ENCODE measurements at regions of chr16 and their contacts with region 1.

Region 1: GRCh38 chr16:67883872-67884261 is 818 bp upstream of the NRN1L start:
- DNase-seq: peak; percentile 57
- H3K4me3 Mint-ChIP-seq: no peak overlapping the region
- H3K27ac Mint-ChIP-seq: peak overlapping the region; percentile 72
- H3K4me1 Mint-ChIP-seq: peaks cover 17% of the 10 kb centered on the region
- H3K27me3 Mint-ChIP-seq: no peaks in the 10 kb centered on the region
- CTCF ChIP-seq: peak; percentile 80

Region 2: GRCh38 chr16:67694611-67695010 is 189.3 kb before region 1 on chr16:
- CTCF ChIA-PET with region 1: no interaction called
- POLR2A ChIA-PET with region 1: no interaction called
- intact Hi-C with region 1: no loop called
- DNase-seq: no peak
- H3K4me3 Mint-ChIP-seq: no peak overlapping the region
- H3K27ac Mint-ChIP-seq: no peak overlapping the region
- H3K4me1 Mint-ChIP-seq: no peaks in the 10 kb centered on the region
- H3K27me3 Mint-ChIP-seq: no peaks in the 10 kb centered on the region
- CTCF ChIP-seq: no peak

Region 3: GRCh38 chr16:67841764-67842508 is 41.9 kb before region 1 on chr16 and contains the start of gene THAP11:
- CTCF ChIA-PET with region 1: interaction called, 15 read pairs
- POLR2A ChIA-PET with region 1: interaction called, 4 read pairs
- intact Hi-C with region 1: no loop called
- DNase-seq: peak; percentile 97
- H3K4me3 Mint-ChIP-seq: peak within 1 kb of the TSS; percentile 84
- H3K27ac Mint-ChIP-seq: peak within 1 kb of the TSS; percentile 86
- H3K4me1 Mint-ChIP-seq: peaks cover 16% of the 10 kb centered on the region
- H3K27me3 Mint-ChIP-seq: no peaks in the 10 kb centered on the region
- CTCF ChIP-seq: peak; percentile 85
- total RNA-seq, gene THAP11: 18.3 and 20.5 TPM in 2 replicates

Region 4: DNA sequence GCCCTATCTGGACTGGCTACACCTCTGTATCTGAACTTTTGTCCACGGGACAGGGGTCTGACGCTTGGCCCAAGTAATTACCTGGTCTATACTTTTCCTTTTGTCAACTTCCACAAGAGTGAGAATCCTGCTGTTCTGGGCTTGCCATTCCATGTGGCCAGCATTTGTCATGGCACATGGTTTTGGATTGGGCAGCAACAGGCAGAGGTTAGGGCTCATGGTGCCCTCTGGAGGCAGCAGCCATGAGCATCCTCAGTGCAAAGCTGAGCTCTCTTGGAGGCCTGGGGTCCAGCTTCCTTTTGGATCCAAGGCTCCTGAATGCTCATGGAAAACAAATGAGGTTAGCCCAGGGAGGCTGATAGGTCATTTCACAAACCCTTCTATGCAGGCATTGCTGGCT is 18.6 kb before region 1 on chr16:
- CTCF ChIA-PET with region 1: interaction called, 11 read pairs
- POLR2A ChIA-PET with region 1: interaction called, 9 read pairs
- intact Hi-C with region 1: no loop called
- DNase-seq: peak; percentile 63
- H3K4me3 Mint-ChIP-seq: no peak overlapping the region
- H3K27ac Mint-ChIP-seq: peak overlapping the region; percentile 96
- H3K4me1 Mint-ChIP-seq: peaks cover 27% of the 10 kb centered on the region
- H3K27me3 Mint-ChIP-seq: no peaks in the 10 kb centered on the region
- CTCF ChIP-seq: peak; percentile 39

Region 5: DNA sequence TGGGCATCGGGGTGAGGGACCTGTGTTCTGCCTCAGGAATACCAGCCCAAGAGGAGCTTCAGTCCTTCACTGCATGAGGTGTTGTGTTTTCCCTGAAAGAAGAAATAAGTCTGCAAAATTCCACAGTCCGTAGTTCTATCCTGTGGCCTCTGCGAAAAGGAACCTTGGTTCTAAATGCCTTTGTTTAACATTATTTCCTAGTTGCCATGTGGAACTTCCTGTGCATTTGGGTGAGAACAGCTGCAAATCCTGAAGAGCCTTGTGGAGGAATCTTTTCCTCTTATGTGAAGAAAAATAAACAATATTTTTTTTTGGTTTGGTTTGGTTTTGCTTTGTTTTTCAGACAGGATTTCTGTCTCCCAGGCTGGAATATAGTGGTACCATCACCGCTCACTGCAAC is 19.0 kb after region 1 on chr16:
- CTCF ChIA-PET with region 1: interaction called, 16 read pairs
- POLR2A ChIA-PET with region 1: interaction called, 4 read pairs
- intact Hi-C with region 1: no loop called
- DNase-seq: no peak
- H3K4me3 Mint-ChIP-seq: no peak overlapping the region
- H3K27ac Mint-ChIP-seq: no peak overlapping the region
- H3K4me1 Mint-ChIP-seq: no peaks in the 10 kb centered on the region
- H3K27me3 Mint-ChIP-seq: no peaks in the 10 kb centered on the region
- CTCF ChIP-seq: no peak

Region 6: GRCh38 chr16:67917852-67918236 is 34.0 kb after region 1 on chr16:
- CTCF ChIA-PET with region 1: interaction called, 17 read pairs
- POLR2A ChIA-PET with region 1: no interaction called
- intact Hi-C with region 1: no loop called
- DNase-seq: peak; percentile 81
- H3K4me3 Mint-ChIP-seq: no peak overlapping the region
- H3K27ac Mint-ChIP-seq: peak overlapping the region; percentile 65
- H3K4me1 Mint-ChIP-seq: peaks cover 15% of the 10 kb centered on the region
- H3K27me3 Mint-ChIP-seq: no peaks in the 10 kb centered on the region
- CTCF ChIP-seq: no peak

Region 7: DNA sequence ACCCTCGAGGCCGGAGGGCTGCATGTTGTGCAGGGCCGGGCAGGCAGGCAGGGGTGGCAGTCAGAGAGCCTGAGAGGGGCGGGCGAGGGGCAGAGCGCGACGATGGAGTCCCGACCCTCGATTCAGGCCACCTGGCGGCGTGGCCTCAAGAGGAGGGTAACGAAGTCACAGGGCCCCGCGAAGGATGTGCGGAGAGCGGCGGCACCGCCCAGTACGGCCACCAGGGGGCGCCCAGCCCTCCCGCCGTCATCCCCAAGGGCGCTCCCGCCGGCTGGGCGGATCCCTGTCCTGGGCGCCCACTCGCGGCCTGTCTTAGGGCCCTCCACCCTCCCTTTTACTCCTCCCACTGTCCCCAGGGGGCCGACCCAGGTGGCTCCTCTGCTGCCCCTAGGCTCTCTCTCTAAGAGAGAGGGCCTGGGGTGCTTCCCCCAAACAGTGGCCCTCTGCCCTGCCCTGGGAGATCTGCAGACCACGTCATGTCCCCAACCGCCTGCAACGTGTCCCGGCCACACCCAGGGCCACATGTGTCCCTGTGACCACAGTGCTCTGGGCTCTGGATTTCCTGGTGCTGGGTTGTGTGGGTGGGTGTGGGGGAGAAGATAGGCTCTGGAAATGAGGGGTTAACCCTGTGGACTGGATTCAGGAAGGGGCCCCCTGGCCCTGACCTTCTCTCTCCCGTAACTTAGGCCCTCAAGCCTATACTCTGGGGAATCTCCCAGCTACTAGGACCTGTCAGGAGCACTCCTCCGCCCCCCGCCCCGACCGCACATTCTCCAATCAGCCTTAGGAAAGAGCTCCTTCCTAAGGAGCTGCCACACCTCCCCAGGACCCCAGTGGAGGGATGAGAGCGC is 109.5 kb after region 1 on chr16:
- CTCF ChIA-PET with region 1: no interaction called
- POLR2A ChIA-PET with region 1: no interaction called
- intact Hi-C with region 1: no loop called
- DNase-seq: peak; percentile 62
- H3K4me3 Mint-ChIP-seq: peak overlapping the region; percentile 53
- H3K27ac Mint-ChIP-seq: peak overlapping the region; percentile 82
- H3K4me1 Mint-ChIP-seq: no peaks in the 10 kb centered on the region
- H3K27me3 Mint-ChIP-seq: no peaks in the 10 kb centered on the region
- CTCF ChIP-seq: peak; percentile 98

Region 8: GRCh38 chr16:68040507-68041288 is 156.8 kb after region 1 on chr16:
- CTCF ChIA-PET with region 1: interaction called, 17 read pairs
- POLR2A ChIA-PET with region 1: no interaction called
- intact Hi-C with region 1: loop called (anchors 1 kb)
- DNase-seq: peak; percentile 81
- H3K4me3 Mint-ChIP-seq: no peak overlapping the region
- H3K27ac Mint-ChIP-seq: no peak overlapping the region
- H3K4me1 Mint-ChIP-seq: no peaks in the 10 kb centered on the region
- H3K27me3 Mint-ChIP-seq: no peaks in the 10 kb centered on the region
- CTCF ChIP-seq: peak; percentile 89

Measured in MCF 10A (cell line).